A549 (cell line): ENCODE measurements at regions of chr10 and their contacts with region 1.

Region 1: DNA sequence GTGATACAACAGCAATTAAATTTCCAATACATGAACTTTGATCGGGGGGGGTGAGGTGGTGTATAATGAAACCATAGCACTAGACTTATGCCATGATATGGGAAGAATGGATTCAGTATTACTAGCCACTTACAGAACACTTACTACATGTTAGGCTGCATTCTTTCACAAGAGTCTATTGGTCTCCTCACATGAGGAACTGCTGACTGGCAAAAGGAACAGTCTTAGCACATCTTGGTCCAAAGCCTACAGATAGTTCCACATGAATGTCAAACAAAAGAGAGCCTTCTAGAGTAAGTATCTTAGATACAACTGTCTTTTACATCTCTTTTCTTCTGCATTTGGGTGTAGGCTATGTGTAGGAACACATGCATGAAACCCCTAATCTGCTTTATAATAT is 115.9 kb upstream of the DNAJB12 start:
- DNase-seq: no peak
- ATAC-seq: no peak
- H3K4me3 ChIP-seq: no peak overlapping the region
- H3K27ac ChIP-seq: no peak overlapping the region
- H3K4me1 ChIP-seq: no peaks in the 10 kb centered on the region
- CTCF ChIP-seq: no peak
- EP300 ChIP-seq: no peak
- POLR2A ChIP-seq: no peak
- RAD21 ChIP-seq: no peak

Region 2: DNA sequence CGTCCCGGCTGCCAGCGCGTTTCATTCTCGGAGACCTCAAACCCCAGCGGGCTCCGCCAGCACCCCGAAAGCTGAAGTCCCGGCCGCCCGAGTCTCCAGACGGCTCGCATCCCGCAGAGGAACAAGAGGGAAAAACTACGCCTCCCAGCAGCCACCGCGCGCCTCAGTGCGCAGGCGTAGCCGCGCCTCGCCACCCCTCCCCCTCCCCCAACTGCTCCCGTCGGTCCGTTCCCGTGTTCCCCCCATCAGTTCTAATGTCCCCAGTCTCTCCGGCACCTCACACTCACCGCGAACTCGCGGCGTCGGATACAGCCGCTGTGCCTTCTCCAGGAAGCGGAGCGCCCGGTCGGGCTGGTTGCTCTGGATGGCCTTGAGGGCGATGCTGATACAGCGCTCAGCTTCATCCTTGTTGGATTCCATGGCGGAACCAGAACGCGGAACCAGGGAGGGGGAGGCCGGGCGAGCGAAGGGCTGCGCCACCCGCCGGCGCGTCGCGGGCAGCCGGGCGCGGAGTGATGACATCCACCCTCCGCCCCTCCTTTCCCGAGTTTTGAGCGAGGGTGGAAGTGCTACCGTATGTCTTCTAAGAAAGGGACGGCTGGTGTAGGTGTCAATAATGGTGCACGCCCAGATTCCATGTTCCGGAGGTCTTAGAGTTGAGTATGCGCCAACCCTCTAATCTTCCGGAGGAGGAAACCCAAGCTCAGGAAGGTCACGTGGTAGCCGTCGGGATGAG is 116.0 kb before region 1 on chr10 and contains the start of gene DNAJB12:
- CTCF ChIA-PET with region 1: no interaction called
- POLR2A ChIA-PET with region 1: interaction called, 11 read pairs
- DNase-seq: peak; percentile 96 to 98
- ATAC-seq: peak; percentile 82 to 90
- H3K4me3 ChIP-seq: peak within 1 kb of the TSS; percentile 65
- H3K27ac ChIP-seq: peak within 1 kb of the TSS; percentile 85 to 97
- H3K4me1 ChIP-seq: peaks cover 12% of the 10 kb centered on the region; the same call in 2 of the 3 replicates
- CTCF ChIP-seq: no peak
- EP300 ChIP-seq: peak in 1 of 2 experiments; percentile 29; a peak in 1 of 5 replicates
- POLR2A ChIP-seq: peak; percentile 64
- RAD21 ChIP-seq: 0 out of 5 replicates have a peak, but pooled peaks of 1 of the 2 experiments have one; percentile 11
- polyA plus RNA-seq, gene DNAJB12: 21.5 and 24.4 TPM in 2 replicates